ENCODE measurements at regions of chr7 and their contacts with region 1.

Region 1: GRCh38 chr7:139725077-139725476 is 52.7 kb downstream of the HIPK2 start:
- DNase-seq: peak; percentile 36
- H3K4me3 ChIP-seq: no peak overlapping the region
- H3K27ac ChIP-seq: no peak overlapping the region
- H3K4me1 ChIP-seq: peaks cover 45% of the 10 kb centered on the region
- H3K27me3 ChIP-seq: no peaks in the 10 kb centered on the region
- CTCF ChIP-seq: no peak

Region 2: DNA sequence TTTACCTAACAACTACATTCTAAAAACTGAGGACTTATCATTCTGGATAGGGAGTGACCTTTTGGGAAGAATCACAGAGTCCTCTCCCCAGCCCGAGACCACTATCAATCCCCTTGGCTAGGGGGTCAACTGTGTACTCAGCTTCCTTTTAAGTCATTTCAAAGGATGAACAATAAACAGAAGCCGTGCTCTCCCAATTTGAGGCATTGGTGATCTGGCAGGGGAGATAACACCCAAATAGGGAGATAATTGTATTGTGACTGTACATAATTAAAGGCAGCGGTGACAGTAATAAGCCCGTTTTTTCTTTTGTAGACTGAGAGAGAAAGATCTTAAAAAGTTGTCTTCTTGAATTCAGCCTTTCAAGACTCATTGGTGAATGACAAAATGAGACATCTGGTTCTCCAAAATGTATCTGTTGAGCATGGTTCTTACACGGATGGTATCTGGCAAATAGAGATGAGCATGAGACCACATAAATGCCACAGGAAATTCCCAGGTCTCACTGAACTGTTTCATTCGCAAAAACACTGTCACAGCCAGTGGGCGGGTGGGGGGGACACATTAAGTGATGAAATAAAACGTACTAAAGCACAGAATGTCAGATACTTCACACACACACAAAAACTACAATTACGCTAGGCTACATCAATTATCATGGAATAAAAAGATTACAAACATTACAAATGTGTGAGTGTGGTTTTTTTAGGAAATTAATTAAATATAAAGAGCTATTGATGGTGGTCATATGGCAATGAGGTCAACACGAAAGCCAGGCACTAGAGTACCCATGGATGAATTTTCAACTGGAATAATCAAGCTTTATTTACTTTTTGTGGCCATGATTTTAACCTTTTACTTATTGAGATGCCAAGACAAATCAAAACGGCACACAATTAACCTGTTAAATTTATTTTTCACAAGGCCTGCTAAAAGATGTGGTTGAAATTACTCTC is 55.7 kb before region 1 on chr7:
- CTCF ChIA-PET with region 1: no interaction called
- dilution Hi-C with region 1: no loop called
- in situ Hi-C with region 1: no loop called
- intact Hi-C with region 1: no loop called
- DNase-seq: no peak
- H3K4me3 ChIP-seq: no peak overlapping the region
- H3K27ac ChIP-seq: no peak overlapping the region
- H3K4me1 ChIP-seq: peaks cover 13% of the 10 kb centered on the region
- H3K27me3 ChIP-seq: no peaks in the 10 kb centered on the region
- CTCF ChIP-seq: no peak

Region 3: DNA sequence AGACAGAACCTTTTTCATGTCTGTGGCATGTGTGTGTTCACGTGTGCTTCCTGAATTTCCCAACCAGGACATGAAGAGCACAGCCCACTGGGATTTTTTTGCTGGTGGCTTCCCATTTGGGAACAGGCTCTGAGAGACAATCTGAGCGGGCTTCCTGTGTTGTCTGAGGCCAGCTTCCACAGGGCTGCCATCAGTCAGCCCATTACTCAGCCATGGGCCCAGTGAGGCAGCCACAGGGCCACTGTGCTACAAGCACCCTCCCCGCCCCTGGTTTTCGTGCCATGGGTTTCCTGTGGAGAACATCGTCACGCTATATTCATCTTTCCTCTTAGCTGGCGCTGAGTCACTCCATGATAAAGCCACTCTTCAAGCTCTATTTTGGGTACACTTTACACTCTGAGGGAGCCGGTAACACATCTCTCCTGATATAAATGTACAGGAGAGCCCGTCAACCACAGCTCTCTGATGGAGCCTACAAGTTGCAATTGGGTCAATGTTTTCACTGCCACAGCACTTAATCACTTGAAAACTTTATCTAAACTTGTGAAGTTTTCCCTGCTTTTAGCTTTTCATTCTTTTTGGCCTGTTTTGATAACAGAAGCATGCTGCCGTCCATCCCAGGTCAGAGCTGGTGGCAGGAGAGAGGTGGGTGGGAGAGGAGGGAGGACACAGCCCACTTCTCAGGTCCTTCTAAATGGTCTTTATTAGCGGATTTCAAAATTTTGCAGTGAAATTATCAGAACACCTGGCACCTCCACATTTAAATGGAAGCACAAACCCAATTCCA is 44.2 kb before region 1 on chr7:
- CTCF ChIA-PET with region 1: no interaction called
- dilution Hi-C with region 1: loop called (anchors 5 kb)
- in situ Hi-C with region 1: loop called in 1 of 2 experiments (anchors 5 kb)
- intact Hi-C with region 1: loop called (anchors 2 kb)
- DNase-seq: peak; percentile 97
- H3K4me3 ChIP-seq: no peak overlapping the region
- H3K27ac ChIP-seq: peak overlapping the region; percentile 97
- H3K4me1 ChIP-seq: peaks cover 49% of the 10 kb centered on the region
- H3K27me3 ChIP-seq: no peaks in the 10 kb centered on the region
- CTCF ChIP-seq: no peak

Region 4: DNA sequence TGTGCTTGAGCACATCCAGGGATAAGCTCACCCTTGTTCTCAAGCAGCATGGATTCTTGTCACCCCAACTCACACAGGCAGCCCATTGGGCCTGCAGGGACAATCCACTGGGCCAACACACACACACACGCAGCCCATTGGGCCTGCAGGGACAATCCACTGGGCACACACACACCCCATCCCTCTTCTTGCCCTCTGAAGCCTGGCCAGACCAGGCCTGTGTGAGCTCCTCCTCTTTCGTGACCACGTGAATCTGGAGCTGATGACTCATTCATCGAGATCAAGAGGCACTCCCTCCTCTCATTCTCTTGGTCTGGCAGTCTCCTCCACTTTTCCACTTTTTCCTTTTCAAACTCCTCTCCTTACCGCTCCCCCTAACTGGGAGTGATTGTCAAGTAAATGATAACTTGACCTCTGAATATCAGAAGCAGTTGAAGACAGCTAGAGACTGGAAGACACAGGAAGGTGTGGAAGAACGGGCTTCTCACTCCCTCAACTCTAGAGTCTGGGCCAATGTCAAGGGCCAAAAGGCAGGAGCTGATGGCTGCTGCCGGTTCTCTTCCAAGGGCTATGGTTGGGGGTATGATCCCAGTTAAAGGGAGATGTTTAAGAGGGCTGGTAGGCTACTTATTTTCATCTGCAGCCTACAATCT is 37.0 kb before region 1 on chr7:
- CTCF ChIA-PET with region 1: no interaction called
- dilution Hi-C with region 1: loop called (anchors 5 kb)
- in situ Hi-C with region 1: loop called in 1 of 2 experiments (anchors 5 kb)
- intact Hi-C with region 1: loop called (anchors 2 kb)
- DNase-seq: peak; percentile 66
- H3K4me3 ChIP-seq: no peak overlapping the region
- H3K27ac ChIP-seq: peak overlapping the region; percentile 51
- H3K4me1 ChIP-seq: peaks cover 31% of the 10 kb centered on the region
- H3K27me3 ChIP-seq: no peaks in the 10 kb centered on the region
- CTCF ChIP-seq: no peak

Region 5: DNA sequence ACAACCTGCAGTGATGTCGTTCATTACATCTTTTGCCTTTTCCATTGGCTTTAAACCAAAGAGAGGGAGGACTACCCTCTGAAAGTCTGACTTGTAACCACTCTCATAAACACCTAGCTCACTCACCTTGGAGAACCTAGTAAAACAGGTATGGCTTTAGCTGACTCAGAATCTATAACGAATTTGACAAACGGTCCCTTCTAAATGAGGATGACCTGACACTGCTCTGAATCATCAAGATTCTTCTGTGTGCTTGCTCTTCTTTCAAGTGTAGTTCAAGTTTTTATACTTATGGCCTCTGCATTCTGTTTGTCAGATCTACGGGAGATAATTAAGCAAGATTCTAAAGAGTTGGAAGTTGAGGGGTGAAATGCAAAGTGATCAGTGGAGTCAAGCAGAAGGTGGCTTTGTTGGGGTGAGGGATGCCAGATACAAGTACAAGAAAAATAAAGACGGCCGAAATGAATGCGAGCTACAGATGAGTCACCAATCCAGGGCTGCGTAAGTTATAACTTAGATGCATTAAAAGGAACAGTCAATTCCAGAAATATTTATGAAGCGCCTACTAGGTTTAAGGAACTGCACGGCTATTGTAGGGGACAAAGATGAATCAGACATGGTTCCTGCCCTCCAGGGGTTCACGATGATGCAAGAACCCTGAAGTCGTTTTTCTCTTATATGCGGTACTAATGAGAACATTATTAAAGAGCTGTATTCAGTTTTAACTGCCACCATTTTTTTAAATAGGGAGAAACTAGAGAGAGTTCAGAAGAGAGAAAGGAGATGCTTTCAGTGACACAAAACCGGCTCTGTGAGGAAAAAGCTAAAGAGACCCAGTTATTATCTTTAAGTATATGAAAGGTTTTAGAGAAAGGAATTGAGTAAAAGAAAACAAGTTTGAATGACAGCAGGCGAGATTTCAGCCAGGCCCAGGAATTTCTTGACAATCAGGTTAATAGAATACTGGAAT is 46.2 kb after region 1 on chr7:
- CTCF ChIA-PET with region 1: interaction called, 15 read pairs
- dilution Hi-C with region 1: no loop called
- in situ Hi-C with region 1: no loop called
- intact Hi-C with region 1: loop called (anchors 1 kb)
- DNase-seq: peak; percentile 94
- H3K4me3 ChIP-seq: peak overlapping the region; percentile 22 to 28 (median 25)
- H3K27ac ChIP-seq: peak overlapping the region; percentile 83
- H3K4me1 ChIP-seq: peaks cover 61% of the 10 kb centered on the region
- H3K27me3 ChIP-seq: no peaks in the 10 kb centered on the region
- CTCF ChIP-seq: no peak

Measured in mammary epithelial cell (primary cell).